ENCODE measurements at regions of chr3 and their contacts with region 1.

Region 1: GRCh38 chr3:159114582-159114981 is 312.7 kb downstream of the MFSD1 start:
- DNase-seq: no peak

Region 2: GRCh38 chr3:159069866-159070425 is 44.6 kb before region 1 on chr3:
- intact Hi-C with region 1: loop called in 1 of 2 experiments (anchors 2 kb)
- DNase-seq: no peak

Region 3: DNA sequence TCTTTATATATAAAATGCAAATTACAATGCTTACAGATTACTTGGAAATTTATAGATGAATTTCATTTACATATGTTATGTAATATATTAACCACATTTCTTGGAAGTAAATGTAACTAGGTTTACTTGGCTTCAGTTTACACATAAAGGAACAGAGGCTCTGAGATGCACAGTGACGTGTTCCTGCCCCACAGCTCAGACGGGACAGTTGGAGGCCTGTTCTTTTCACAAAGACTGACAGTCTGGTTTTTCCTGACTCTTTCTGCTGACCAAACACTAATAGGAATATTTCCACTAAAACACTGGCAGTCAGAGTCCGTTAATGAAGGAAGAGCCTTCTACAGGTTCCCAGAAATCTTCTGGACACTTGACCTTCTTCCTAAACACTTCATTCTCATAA is 23.4 kb after region 1 on chr3:
- intact Hi-C with region 1: no loop called
- DNase-seq: no peak